Tibial artery (tissue), 4 donors: ENCODE measurements at regions of chr19 and their contacts with region 1.

Region 1: DNA sequence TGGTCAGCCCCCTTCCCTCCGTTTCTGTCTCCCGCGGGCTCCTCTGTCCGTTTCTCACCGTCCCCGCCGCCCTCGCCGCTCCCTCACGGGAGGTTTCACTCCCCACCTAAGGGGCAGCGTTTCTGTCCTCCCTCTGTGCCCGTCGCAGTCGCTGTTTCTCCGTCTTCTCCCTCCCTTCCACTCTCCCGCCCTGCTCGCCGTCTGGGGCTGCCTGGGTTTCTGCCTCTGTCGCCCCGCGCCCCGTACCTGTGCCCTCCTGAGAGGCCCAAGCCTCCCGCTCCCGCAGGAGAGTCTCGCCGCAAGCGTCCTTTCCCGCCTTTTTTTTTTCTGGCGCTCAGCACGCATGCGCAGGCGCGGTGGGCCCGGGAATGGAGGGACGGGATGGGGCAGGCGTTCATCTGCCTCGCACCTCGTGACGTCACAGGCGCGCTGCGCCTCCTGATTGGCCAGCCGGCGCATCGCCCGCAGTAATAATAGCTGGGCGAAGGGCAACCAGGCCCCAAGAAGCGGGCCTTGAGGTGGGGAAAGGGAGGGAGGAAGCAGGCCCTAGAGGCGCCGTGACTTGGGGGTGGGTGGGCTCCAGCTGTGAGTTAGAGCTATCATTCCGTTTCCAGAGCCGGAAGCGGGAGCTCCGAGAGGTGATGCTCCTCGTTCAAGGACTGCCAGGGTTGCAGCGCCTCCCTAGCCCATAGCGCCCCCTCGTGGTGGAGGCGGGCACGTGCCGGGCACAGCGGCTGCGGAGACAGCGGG is 15.4 kb downstream of the SSC5D start:
- DNase-seq: peak; percentile 91 to 94
- H3K4me3 ChIP-seq: peak overlapping the region; percentile 40 to 60
- H3K27ac ChIP-seq: no peak overlapping the region
- H3K4me1 ChIP-seq: peaks cover 0 to 13% (median 4%) of the 10 kb centered on the region in 4 donors
- H3K27me3 ChIP-seq: peaks cover 0 to 6% of the 10 kb centered on the region in 2 donors
- CTCF ChIP-seq: peak; percentile 97 to 98

Region 2: DNA sequence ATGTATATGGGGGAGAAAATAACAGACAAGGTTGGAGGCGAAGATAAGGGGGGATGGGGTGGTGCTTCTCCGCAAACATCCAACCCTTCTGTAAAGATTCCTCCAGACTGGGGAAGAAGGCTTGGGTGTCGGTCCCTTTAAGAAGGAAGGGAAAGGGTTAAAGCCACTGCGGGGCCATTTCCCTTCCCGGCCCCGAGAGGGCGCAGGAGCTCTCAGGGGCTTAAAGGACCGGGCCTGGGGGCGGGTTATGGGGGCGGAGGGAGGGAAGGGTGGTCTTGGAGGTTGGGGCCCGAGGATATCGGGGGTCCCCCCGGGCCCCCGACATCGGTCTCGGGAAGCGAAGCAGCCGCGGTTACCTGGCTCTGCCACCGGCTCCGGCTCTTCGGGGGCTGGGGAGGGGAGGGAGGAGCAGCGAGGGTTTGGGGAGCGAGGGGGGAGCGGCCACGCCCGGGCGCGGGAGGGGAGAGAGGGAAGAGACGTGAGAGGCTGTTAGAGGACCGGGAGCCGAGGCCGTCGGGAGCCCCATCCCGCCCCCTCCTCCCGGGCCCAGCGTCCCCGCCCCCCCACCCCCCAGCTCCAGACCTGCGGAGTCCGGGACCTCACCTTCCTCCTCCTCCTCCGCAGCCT is 357.5 kb before region 1 on chr19:
- intact Hi-C with region 1: loop called (anchors 5 kb)
- DNase-seq: no peak
- H3K4me3 ChIP-seq: no peak overlapping the region
- H3K27ac ChIP-seq: no peak overlapping the region
- H3K4me1 ChIP-seq: peaks cover 0 to 18% (median 4%) of the 10 kb centered on the region in 4 donors
- H3K27me3 ChIP-seq: peaks cover 7 to 95% of the 10 kb centered on the region in 2 donors
- CTCF ChIP-seq: no peak

Region 3: GRCh38 chr19:55467236-55468053 is 36.2 kb before region 1 on chr19:
- intact Hi-C with region 1: loop called (anchors 2 kb)
- DNase-seq: peak; percentile 69 to 81
- H3K4me3 ChIP-seq: no peak overlapping the region
- H3K27ac ChIP-seq: no peak overlapping the region
- H3K4me1 ChIP-seq: peaks cover 0 to 9% (median 3%) of the 10 kb centered on the region in 4 donors
- H3K27me3 ChIP-seq: peaks cover 0 to 1% of the 10 kb centered on the region in 2 donors
- CTCF ChIP-seq: peak; percentile 93 to 98